GM10248 (cell line): ENCODE measurements at regions of chr5 and their contacts with region 1.

Region 1: DNA sequence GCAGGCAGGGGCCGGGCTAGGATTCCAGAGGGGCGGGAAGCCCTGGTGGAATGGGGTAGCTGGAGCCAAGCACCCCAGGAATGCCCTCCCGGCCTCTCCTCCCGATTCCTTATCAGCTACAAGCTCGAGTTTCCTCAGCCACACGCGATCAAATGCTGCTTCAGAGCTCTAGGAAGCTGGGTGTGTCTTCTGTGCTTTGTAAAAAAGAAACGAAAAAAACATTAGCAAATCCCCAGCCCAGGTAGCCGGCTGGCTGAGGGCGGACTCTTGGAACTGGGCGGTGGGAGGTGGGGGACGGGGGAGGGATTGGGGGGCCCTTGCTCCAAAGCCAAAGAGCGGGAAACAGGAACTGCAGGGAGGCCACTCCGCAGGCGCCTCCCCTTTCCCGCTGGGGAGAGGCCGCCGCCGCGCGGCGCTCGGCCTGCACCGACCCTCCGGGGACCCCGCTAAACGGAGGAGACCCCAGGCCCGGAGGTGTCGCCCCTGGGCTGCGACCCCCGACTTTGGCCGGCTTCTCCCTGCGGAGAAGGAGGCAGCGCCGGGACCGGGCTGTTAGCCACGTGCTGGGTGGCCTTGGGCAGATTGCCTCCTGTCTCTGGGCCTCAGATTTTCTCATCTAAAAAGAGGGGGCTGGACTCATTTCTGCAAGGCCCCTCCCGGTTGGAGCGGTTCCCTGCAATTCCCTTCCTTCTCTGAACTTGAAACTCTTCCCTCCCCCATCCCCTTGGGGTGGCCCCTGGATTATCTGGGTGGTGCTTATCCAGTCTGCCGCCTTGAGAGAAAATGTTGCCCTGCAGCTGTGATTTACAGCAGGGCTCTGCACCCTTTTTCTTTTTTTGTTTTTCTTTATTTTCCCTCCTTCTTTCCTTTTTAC is 40.9 kb upstream of the FABP6 start:
- DNase-seq: peak; percentile 53
- CTCF ChIP-seq: no peak

Region 2: GRCh38 chr5:160199410-160199911 is 11.1 kb after region 1 on chr5:
- CTCF ChIA-PET with region 1: interaction called, 24 read pairs
- POLR2A ChIA-PET with region 1: no interaction called
- DNase-seq: peak; percentile 91
- CTCF ChIP-seq: peak; percentile 90